GM10248 (cell line): ENCODE measurements at regions of chr4 and their contacts with region 1.

Region 1: DNA sequence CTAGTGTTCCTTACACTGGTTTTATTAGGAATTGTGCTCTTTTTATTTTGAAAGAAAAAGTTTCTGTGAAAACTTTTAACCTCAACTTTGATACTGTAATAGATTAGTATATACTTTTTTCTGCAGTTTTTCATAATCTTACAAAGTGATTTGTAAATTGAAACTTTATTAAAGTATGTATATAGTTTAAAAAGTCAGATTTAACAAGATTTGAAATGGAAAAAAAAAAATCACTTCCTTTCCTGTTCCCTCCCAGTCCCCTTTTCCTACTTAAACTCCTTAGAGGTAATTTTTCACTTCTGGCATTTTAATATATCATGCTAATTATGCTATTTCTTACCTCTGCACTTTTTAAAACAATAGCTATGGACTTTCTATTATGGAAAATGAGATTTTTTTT is 49.3 kb downstream of the PAQR3 start:
- DNase-seq: no peak
- CTCF ChIP-seq: no peak

Region 2: GRCh38 chr4:78876568-78877320 is 13.2 kb before region 1 on chr4:
- CTCF ChIA-PET with region 1: interaction called, 11 read pairs
- POLR2A ChIA-PET with region 1: no interaction called
- DNase-seq: no peak
- CTCF ChIP-seq: no peak